Activated naive CD4-positive, alpha-beta T cell treated with anti-CD3 and anti-CD28 coated beads for 36 hours (primary cell): ENCODE measurements at regions of chrX and their contacts with region 1.

Region 1: DNA sequence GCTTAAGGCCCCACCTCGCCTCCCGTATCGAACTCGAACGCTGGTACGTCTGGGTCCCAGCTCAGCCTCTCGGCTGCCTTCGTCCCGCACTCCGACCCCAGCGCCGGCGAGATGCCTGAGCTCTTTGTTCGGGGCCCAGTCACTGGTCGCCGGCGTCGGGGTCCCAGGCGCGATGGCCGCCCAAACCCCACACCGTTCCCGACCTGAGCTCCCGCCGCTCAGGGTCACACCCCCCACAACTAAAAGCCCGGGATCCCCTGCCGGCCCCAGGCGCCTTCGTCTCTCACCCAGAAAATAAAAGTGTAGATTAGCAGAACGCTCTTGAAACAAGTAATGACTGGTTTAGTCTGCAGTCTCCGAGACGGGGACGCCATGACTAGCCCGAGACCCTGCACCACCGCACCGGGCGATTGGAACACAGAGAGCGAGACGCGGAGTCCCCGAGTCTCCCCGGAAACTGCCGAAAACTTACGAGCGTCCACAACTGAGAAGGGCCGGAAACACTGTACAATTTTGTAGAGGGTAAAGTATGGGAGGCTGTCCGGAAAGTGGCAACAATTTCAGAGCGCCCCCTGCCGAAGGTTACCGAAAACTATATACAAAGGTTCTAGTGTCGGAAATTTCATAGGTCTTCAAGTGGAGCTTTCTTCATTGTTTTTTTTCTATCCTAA is at the start of gene TSPAN6:
- DNase-seq: peak; percentile 84
- H3K4me3 Mint-ChIP-seq: peak within 1 kb of the TSS; percentile 86
- H3K27ac Mint-ChIP-seq: peak within 1 kb of the TSS; percentile 12
- H3K4me1 Mint-ChIP-seq: peaks cover 6% of the 10 kb centered on the region
- H3K27me3 Mint-ChIP-seq: peaks cover 3% of the 10 kb centered on the region
- total RNA-seq, gene TSPAN6: 0.42 to 0.57 TPM

Region 2: GRCh38 chrX:100447654-100448397 is 188.6 kb before region 1 on chrX:
- CTCF ChIA-PET with region 1: no interaction called
- intact Hi-C with region 1: loop called (anchors 10 kb)
- DNase-seq: peak; percentile 20
- H3K4me3 Mint-ChIP-seq: no peak overlapping the region
- H3K27ac Mint-ChIP-seq: no peak overlapping the region
- H3K4me1 Mint-ChIP-seq: no peaks in the 10 kb centered on the region
- H3K27me3 Mint-ChIP-seq: peaks cover 5% of the 10 kb centered on the region

Region 3: DNA sequence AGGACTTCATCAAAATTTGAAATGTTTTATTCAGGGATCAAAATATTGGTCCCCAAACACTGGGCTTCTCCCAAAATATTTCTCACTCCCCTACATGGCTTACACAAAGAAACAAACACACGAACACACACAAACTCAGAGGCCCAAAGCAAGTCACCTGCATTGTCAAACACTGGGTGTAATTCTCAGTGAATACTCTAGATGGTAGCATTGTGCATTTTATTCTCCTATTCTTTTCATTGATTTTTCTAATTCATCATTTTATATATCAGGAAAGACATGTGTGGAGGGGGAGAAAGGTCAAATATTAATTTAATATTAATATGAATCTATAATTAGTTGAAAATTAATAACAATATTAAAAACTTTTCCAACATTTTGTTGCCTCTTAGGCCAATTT is 124.0 kb before region 1 on chrX:
- CTCF ChIA-PET with region 1: interaction called, 12 read pairs
- intact Hi-C with region 1: loop called (anchors 1 kb)
- DNase-seq: no peak
- H3K4me3 Mint-ChIP-seq: no peak overlapping the region
- H3K27ac Mint-ChIP-seq: no peak overlapping the region
- H3K4me1 Mint-ChIP-seq: no peaks in the 10 kb centered on the region
- H3K27me3 Mint-ChIP-seq: no peaks in the 10 kb centered on the region

Region 4: DNA sequence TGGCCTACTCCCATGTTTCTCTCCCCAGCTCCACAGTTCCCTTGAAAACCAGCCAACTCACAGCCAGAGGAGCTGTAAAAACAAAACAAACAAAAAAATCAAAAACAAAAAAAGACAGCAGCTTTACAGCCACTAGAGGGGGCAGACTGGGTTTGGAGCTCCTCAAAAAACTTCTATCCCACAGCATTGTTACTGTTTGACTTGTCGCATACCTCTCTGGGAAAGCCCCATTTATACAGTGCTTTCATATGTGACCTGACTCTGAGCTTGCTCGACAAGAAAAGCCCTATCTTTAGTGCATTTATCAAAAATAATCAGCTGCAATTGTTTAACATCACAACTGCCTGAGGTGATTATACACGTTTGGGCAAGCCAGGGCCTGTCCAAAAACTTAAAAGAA is 21.5 kb before region 1 on chrX:
- CTCF ChIA-PET with region 1: interaction called, 8 read pairs
- intact Hi-C with region 1: loop called (anchors 1 kb)
- DNase-seq: peak; percentile 13
- H3K4me3 Mint-ChIP-seq: no peak overlapping the region
- H3K27ac Mint-ChIP-seq: no peak overlapping the region
- H3K4me1 Mint-ChIP-seq: peaks cover 1% of the 10 kb centered on the region
- H3K27me3 Mint-ChIP-seq: peaks cover 9% of the 10 kb centered on the region

Region 5: GRCh38 chrX:100625985-100626491 is 10.4 kb before region 1 on chrX:
- CTCF ChIA-PET with region 1: no interaction called
- intact Hi-C with region 1: loop called (anchors 1 kb)
- DNase-seq: peak; percentile 21
- H3K4me3 Mint-ChIP-seq: no peak overlapping the region
- H3K27ac Mint-ChIP-seq: no peak overlapping the region
- H3K4me1 Mint-ChIP-seq: peaks cover 10% of the 10 kb centered on the region
- H3K27me3 Mint-ChIP-seq: no peaks in the 10 kb centered on the region